Breast epithelium (tissue), 4 donors: ENCODE measurements at regions of chr20 and their contacts with region 1.

Region 1: DNA sequence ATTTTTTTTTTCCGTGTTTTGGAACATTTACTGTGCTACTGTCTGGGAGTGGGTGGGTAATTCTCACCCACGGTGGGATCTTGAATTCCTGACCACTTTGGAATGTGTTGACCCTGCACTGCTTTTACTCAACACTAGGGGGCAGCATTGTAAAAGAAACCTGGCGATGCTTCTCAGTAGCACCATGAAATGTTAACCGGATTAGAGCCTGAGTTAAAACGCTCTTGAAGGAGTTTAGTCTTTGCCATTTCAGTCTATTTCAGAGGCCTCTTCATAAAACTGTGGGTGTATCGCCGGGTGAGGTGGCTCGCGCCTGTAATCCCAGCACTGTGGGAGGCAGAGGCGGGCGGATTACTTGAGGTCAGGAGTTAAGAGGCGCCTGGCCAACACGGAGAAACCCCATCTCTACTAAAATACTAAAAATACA is 114.4 kb upstream of the PRND start:
- DNase-seq: peak in 1 of 2 donors; percentile 49
- H3K4me3 ChIP-seq: no peak overlapping the region
- H3K27ac ChIP-seq: no peak overlapping the region
- H3K4me1 ChIP-seq: no peaks in the 10 kb centered on the region
- H3K27me3 ChIP-seq: peaks cover 0 to 5% of the 10 kb centered on the region in 2 donors
- CTCF ChIP-seq: peak; percentile 97
- POLR2A ChIP-seq: no peak

Region 2: DNA sequence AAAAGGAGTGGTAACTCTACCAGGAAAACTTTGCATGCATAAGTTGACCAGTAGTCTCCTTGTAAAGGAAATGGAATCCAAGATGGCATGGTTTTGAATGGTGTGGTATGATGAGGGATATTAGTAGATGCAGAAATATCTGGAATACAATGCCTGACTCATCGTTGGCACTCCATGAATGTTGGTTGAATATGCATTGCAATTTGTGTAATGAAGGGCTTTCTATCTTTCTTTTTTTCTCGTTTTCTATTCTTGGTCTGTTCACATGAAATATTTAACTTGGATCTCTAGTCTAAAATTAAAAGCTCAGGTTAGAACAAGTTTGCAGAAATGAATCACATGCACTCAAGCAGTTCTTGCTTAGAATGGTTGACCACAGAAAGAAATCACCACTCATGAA is 162.9 kb before region 1 on chr20:
- intact Hi-C with region 1: no loop called
- DNase-seq: no peak
- H3K4me3 ChIP-seq: no peak overlapping the region
- H3K27ac ChIP-seq: no peak overlapping the region
- H3K4me1 ChIP-seq: no peaks in the 10 kb centered on the region
- H3K27me3 ChIP-seq: no peaks in the 10 kb centered on the region
- CTCF ChIP-seq: no peak
- POLR2A ChIP-seq: no peak

Region 3: GRCh38 chr20:4645646-4646045 is 38.3 kb after region 1 on chr20:
- intact Hi-C with region 1: no loop called
- DNase-seq: peak in 1 of 2 donors; percentile 31
- H3K4me3 ChIP-seq: no peak overlapping the region
- H3K27ac ChIP-seq: no peak overlapping the region
- H3K4me1 ChIP-seq: no peaks in the 10 kb centered on the region
- H3K27me3 ChIP-seq: no peaks in the 10 kb centered on the region
- CTCF ChIP-seq: no peak
- POLR2A ChIP-seq: no peak

Region 4: DNA sequence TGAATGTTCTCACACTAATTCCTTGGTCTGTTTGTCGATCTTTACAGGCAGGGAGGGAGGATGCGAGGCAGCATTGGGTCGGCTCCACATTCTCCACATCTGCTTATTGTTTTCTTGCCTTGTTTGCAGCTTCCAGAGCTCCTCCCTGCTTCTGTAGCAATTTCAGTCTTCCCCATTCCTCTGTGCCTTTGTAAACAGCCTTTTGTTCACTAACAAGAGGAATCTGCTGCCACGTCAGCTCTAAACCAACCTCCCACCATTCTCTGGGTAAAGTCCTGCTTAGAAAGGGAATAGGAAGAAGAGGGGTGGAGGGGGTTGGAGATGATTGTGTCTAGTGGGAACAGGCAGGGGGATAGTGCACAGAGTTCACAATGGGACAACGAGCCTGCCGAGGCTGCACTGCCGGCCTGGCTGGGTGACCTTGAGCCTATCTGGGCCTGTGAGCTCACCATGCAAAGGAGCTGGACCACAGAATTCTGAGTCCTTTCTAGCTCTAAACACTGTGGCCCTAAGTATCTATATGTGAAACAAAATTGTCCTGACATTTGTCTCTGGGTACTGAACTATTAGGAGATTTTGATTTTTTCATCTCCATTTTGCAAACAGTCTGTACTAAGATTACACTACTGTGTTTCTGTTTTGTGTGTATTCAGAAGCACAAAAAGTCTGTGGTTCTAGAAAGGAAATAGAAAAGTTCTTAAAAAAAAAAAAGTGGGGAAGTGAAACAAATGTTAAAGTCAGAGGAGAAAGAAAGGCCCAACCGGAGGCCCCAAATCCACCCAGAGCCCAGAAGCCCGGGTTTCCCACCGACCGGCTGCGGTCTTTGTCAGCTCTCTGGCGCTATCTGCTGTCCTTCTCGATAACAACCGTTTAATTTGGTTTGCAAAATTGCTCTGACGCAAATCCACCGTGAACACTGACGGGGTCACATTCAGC is 113.0 kb after region 1 on chr20:
- intact Hi-C with region 1: loop called (anchors 5 kb)
- DNase-seq: peak; percentile 58 to 64
- H3K4me3 ChIP-seq: no peak overlapping the region
- H3K27ac ChIP-seq: peak overlapping the region; percentile 77 to 89
- H3K4me1 ChIP-seq: no peaks in the 10 kb centered on the region
- H3K27me3 ChIP-seq: no peaks in the 10 kb centered on the region
- CTCF ChIP-seq: peak; percentile 23 to 80 (median 68)
- POLR2A ChIP-seq: no peak